ENCODE measurements at regions of chr6 and their contacts with region 1.

Region 1: GRCh38 chr6:136249811-136250685 is at the start of gene MTFR2:
- DNase-seq: peak; percentile 91 to 98
- ATAC-seq: peak; percentile 92 to 97 (median 97)
- H3K4me3 ChIP-seq: peak within 1 kb of the TSS; percentile 71
- H3K4me3 Mint-ChIP-seq: peak within 1 kb of the TSS; percentile 98
- H3K27ac ChIP-seq: no peak within 1 kb of the TSS
- H3K27ac Mint-ChIP-seq: peak within 1 kb of the TSS; percentile 80 to 91
- H3K4me1 ChIP-seq: peaks cover 15% of the 10 kb centered on the region
- H3K4me1 Mint-ChIP-seq: peaks cover 24 to 32% of the 10 kb centered on the region in 2 donors
- H3K27me3 ChIP-seq: no peaks in the 10 kb centered on the region
- H3K27me3 Mint-ChIP-seq: no peaks in the 10 kb centered on the region
- CTCF ChIP-seq: no peak
- total RNA-seq, gene MTFR2: 1.7 to 2.1 (median 2.0) TPM

Region 2: DNA sequence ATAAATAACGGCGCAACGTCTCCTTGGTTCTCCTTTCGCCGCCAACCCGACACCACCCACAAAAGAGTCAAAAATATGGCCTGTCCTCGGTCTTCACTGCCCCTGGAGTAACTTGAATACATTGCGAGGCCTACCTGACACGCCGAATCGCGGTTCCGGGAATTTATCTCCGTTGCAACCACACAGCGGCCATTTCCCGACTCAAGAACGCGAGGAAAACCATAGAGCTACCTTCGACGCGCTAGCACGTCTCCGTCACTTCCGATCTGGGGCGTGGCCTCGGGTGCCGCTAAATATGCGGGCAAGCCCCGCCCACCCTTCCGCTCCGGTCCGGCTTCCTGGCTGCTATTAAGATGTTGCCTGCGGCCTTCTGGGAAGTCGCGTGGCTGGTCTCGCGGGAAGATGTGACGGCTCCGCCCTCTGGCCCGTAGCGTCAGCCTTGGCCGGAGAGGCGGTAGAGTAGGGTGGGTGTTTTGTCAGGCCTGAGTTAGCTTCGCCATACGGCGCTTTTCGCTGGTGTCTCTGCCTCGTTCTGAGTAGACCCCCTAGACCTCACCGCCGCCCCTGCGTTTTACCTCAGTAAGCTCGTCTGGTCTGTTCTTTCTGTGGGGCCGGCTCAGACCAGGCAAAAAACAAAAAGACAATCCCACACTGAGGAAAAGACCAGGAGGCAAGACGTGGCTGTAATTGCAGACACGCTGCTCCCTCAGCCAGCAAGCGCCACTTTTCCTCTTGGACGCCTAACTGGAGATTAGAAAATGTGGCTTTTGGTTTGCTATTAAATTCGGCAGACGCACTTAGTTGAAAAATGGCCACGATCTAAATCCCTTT is 39.7 kb after region 1 on chr6 and contains the start of gene BCLAF1:
- intact Hi-C with region 1: loop called (anchors 1 kb)
- DNase-seq: peak; percentile 99 to 100
- ATAC-seq: peak; percentile 68 to 88 (median 74)
- H3K4me3 ChIP-seq: peak within 1 kb of the TSS; percentile 91
- H3K4me3 Mint-ChIP-seq: peak within 1 kb of the TSS; percentile 98
- H3K27ac ChIP-seq: peak within 1 kb of the TSS; percentile 97
- H3K27ac Mint-ChIP-seq: peak within 1 kb of the TSS; percentile 95 to 99
- H3K4me1 ChIP-seq: peaks cover 40% of the 10 kb centered on the region
- H3K4me1 Mint-ChIP-seq: peaks cover 52 to 63% of the 10 kb centered on the region in 2 donors
- H3K27me3 ChIP-seq: no peaks in the 10 kb centered on the region
- H3K27me3 Mint-ChIP-seq: no peaks in the 10 kb centered on the region
- CTCF ChIP-seq: no peak
- total RNA-seq, gene BCLAF1: 391 to 582 (median 465) TPM

Region 3: GRCh38 chr6:136378886-136379285 is 128.8 kb after region 1 on chr6:
- intact Hi-C with region 1: no loop called
- DNase-seq: no peak
- ATAC-seq: no peak
- H3K4me3 ChIP-seq: no peak overlapping the region
- H3K4me3 Mint-ChIP-seq: no peak overlapping the region
- H3K27ac ChIP-seq: no peak overlapping the region
- H3K27ac Mint-ChIP-seq: no peak overlapping the region
- H3K4me1 ChIP-seq: no peaks in the 10 kb centered on the region
- H3K4me1 Mint-ChIP-seq: no peaks in the 10 kb centered on the region
- H3K27me3 ChIP-seq: no peaks in the 10 kb centered on the region
- H3K27me3 Mint-ChIP-seq: peaks cover 5 to 9% of the 10 kb centered on the region in 2 donors
- CTCF ChIP-seq: no peak